SK-N-SH (cell line): ENCODE measurements at regions of chr1 and their contacts with region 1.

Region 1: GRCh38 chr1:47192458-47193384 is 2.9 kb upstream of the PDZK1IP1 start:
- DNase-seq: peak; percentile 78
- H3K4me3 ChIP-seq: no peak overlapping the region
- H3K27ac ChIP-seq: no peak overlapping the region
- H3K4me1 ChIP-seq: peaks cover 0 to 3% of the 10 kb centered on the region in 2 experiments; a peak in 1 of 4 replicates
- H3K27me3 ChIP-seq: peaks cover 5% of the 10 kb centered on the region
- CTCF ChIP-seq: peak; percentile 96
- EP300 ChIP-seq: no peak
- RAD21 ChIP-seq: peak; percentile 77

Region 2: DNA sequence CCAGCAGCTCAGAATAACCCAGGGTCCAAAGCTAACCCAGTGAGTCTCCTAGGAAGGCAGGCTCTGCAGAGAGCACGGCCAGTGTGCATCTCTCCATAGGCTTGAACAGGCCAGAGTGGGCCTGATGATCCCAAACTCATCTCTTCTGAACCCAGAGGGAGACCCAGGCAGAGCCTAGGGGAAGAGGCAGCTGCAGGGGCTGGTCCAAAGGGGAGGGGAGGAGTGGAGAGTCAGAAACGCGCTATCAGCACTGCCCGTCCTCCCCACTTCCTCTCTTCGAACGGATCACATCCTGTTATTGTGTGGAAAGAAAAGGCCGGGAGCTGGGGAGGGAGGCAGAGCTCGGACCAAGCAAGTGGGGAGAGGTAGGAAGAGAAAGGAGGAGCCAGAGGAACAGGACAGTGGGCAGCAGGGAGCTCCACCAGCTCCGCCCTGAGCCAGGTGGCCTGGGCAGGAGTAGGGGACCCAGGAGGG is 19.1 kb after region 1 on chr1:
- CTCF ChIA-PET with region 1: interaction called, 25 read pairs
- POLR2A ChIA-PET with region 1: no interaction called
- DNase-seq: no peak
- H3K4me3 ChIP-seq: no peak overlapping the region
- H3K27ac ChIP-seq: no peak overlapping the region
- H3K4me1 ChIP-seq: no peaks in the 10 kb centered on the region
- H3K27me3 ChIP-seq: no peaks in the 10 kb centered on the region; the same call in 1 of the 2 replicates
- CTCF ChIP-seq: no peak
- EP300 ChIP-seq: no peak
- RAD21 ChIP-seq: no peak

Region 3: GRCh38 chr1:47280157-47280556 is 87.4 kb after region 1 on chr1:
- CTCF ChIA-PET with region 1: interaction called, 10 read pairs
- POLR2A ChIA-PET with region 1: no interaction called
- DNase-seq: no peak
- H3K4me3 ChIP-seq: no peak overlapping the region
- H3K27ac ChIP-seq: no peak overlapping the region
- H3K4me1 ChIP-seq: no peaks in the 10 kb centered on the region; a peak in 1 of 4 replicates
- H3K27me3 ChIP-seq: no peaks in the 10 kb centered on the region
- CTCF ChIP-seq: no peak
- EP300 ChIP-seq: no peak
- RAD21 ChIP-seq: no peak

Region 4: DNA sequence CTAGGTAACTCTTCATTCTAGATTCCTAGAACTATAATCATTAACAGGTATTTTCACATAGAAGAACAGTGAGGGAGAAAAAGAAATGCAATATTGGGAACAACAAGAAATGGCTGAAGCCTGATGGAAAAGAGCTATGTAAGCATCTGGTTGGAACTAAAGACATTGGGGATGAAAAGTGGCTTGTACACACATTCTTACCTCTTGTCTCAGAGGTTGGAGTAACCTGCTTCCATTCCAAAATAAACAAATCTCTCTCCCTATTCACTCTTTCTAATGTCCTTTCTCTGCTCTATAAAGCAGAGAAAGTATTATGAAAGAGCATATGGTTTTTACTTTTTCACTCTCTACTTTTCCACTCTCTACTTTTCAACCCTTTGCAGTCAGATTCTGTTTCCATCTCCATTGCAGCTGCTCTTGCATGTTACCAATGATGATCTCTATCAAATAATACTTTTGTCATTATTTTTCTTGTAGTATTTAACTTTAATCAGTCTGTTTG is 178.3 kb after region 1 on chr1:
- CTCF ChIA-PET with region 1: no interaction called
- POLR2A ChIA-PET with region 1: no interaction called
- DNase-seq: no peak
- H3K4me3 ChIP-seq: no peak overlapping the region
- H3K27ac ChIP-seq: no peak overlapping the region
- H3K4me1 ChIP-seq: no peaks in the 10 kb centered on the region
- H3K27me3 ChIP-seq: no peaks in the 10 kb centered on the region
- CTCF ChIP-seq: no peak
- EP300 ChIP-seq: no peak
- RAD21 ChIP-seq: no peak

Region 5: DNA sequence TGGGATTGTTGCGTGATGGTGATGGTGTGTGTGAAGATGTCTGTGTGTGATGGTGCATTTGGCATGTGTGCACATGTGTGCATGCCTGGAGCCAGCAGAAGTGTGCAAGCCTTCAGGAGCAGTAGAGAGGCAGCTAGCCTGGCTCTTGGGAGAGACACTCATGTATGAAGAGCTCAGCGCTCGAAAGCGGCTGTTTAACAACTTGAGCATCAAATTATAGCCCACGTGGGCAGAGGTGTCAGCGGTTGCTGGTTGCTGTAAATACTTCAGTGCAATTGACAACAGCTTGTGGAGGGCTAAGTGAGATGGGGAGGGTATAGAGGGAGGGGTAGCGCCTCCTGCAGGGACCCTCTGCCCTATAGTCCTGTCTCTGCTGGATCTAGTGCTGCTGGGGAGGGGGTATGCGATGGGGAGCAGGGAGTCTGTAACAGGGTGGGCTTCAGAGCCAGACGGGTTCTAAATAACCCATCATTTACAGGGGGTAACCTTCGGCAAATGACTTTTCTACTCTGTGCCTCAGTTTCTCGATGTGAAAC is 266.6 kb after region 1 on chr1:
- CTCF ChIA-PET with region 1: no interaction called
- POLR2A ChIA-PET with region 1: no interaction called
- DNase-seq: no peak
- H3K4me3 ChIP-seq: no peak overlapping the region
- H3K27ac ChIP-seq: no peak overlapping the region
- H3K4me1 ChIP-seq: no peaks in the 10 kb centered on the region
- H3K27me3 ChIP-seq: peaks cover 15% of the 10 kb centered on the region
- CTCF ChIP-seq: no peak
- EP300 ChIP-seq: no peak
- RAD21 ChIP-seq: no peak

Region 6: DNA sequence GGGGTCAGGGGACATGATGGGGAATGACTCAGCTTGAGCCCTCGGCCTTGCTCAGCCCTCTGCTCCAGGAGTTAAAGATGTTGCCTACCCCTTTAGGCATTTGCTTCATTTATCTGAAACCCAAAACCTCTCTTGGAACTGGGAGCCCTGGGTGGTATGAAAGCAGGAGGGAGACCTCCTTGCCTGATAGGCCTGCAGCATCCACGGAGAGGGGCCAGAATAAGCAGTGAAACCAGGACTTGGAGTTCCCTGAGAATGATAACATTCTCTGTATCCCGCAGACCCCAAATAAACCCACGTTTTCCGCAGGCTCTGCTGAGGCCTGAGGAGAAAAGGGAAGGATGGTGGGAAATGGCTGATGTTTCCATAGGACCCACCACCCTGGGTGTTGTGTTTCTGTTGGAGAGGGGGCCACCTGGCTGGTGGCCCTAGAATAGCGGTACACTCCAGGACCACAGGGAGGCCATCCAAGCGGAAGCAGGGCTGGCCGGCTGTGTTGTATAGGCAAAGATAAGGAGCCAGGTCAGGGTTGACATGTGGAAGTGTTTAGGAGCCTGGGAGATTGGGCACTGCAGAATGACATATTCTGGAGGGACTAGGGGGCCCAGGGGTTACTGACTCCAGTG is 322.6 kb after region 1 on chr1:
- CTCF ChIA-PET with region 1: no interaction called
- POLR2A ChIA-PET with region 1: no interaction called
- DNase-seq: peak; percentile 48
- H3K4me3 ChIP-seq: no peak overlapping the region
- H3K27ac ChIP-seq: no peak overlapping the region
- H3K4me1 ChIP-seq: peaks cover 0 to 3% of the 10 kb centered on the region in 2 experiments; a peak in 1 of 4 replicates
- H3K27me3 ChIP-seq: no peaks in the 10 kb centered on the region; the same call in 1 of the 2 replicates
- CTCF ChIP-seq: no peak
- EP300 ChIP-seq: no peak
- RAD21 ChIP-seq: no peak